ENCODE measurements at regions of chr7 and their contacts with region 1.

Region 1: GRCh38 chr7:131097662-131098376 is 229.9 kb upstream of the MKLN1 start:
- DNase-seq: no peak
- ATAC-seq: no peak
- H3K4me3 ChIP-seq: no peak overlapping the region
- H3K4me3 Mint-ChIP-seq: peak overlapping the region; percentile 49
- H3K27ac ChIP-seq: no peak overlapping the region
- H3K27ac Mint-ChIP-seq: peak overlapping the region; percentile 7
- H3K4me1 ChIP-seq: peaks cover 74% of the 10 kb centered on the region
- H3K4me1 Mint-ChIP-seq: peaks cover 88% of the 10 kb centered on the region
- H3K27me3 ChIP-seq: no peaks in the 10 kb centered on the region
- H3K27me3 Mint-ChIP-seq: no peaks in the 10 kb centered on the region
- CTCF ChIP-seq: no peak

Region 2: DNA sequence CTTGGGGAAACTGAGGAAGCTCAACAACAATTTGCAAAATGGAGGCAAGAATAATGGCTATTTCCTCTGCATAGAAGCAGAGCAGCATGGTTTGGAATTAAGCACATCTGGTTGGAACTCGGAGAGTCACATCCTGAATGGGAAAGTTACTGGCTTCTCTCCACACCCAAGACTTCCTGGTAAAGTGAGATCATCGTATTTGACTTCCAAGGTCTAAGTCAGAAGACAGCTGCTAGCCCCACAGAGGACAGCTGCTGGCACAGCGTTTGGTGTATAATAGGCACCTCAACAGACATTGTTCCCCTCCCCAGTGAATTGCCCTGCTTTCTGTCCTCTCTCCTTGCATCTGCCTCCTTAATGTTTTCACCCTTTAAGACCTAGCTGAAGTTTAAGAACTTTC is 1523.3 kb before region 1 on chr7:
- CTCF ChIA-PET with region 1: no interaction called
- POLR2A ChIA-PET with region 1: no interaction called
- intact Hi-C with region 1: no loop called
- DNase-seq: no peak
- ATAC-seq: no peak
- H3K4me3 ChIP-seq: no peak overlapping the region
- H3K4me3 Mint-ChIP-seq: no peak overlapping the region
- H3K27ac ChIP-seq: no peak overlapping the region
- H3K27ac Mint-ChIP-seq: no peak overlapping the region
- H3K4me1 ChIP-seq: no peaks in the 10 kb centered on the region
- H3K4me1 Mint-ChIP-seq: no peaks in the 10 kb centered on the region
- H3K27me3 ChIP-seq: no peaks in the 10 kb centered on the region
- H3K27me3 Mint-ChIP-seq: no peaks in the 10 kb centered on the region
- CTCF ChIP-seq: no peak

Region 3: GRCh38 chr7:131083781-131084180 is 14.0 kb before region 1 on chr7:
- CTCF ChIA-PET with region 1: no interaction called
- POLR2A ChIA-PET with region 1: interaction called, 3 read pairs
- intact Hi-C with region 1: loop called in 1 of 2 experiments (anchors 2 kb)
- DNase-seq: no peak
- ATAC-seq: no peak
- H3K4me3 ChIP-seq: no peak overlapping the region
- H3K4me3 Mint-ChIP-seq: peak overlapping the region; percentile 11
- H3K27ac ChIP-seq: no peak overlapping the region
- H3K27ac Mint-ChIP-seq: peak overlapping the region; percentile 6
- H3K4me1 ChIP-seq: peaks cover 44% of the 10 kb centered on the region
- H3K4me1 Mint-ChIP-seq: peaks cover 63% of the 10 kb centered on the region
- H3K27me3 ChIP-seq: no peaks in the 10 kb centered on the region
- H3K27me3 Mint-ChIP-seq: no peaks in the 10 kb centered on the region
- CTCF ChIP-seq: no peak

Measured in CD4-positive, alpha-beta T cell (primary cell).